ENCODE measurements at regions of chr7 and their contacts with region 1.

Region 1: GRCh38 chr7:75599244-75599781 is 107.2 kb downstream of the SPDYE5 start:
- DNase-seq: no peak
- H3K4me3 Mint-ChIP-seq: no peak overlapping the region
- H3K27ac Mint-ChIP-seq: no peak overlapping the region
- H3K4me1 Mint-ChIP-seq: peaks cover 23% of the 10 kb centered on the region
- H3K27me3 Mint-ChIP-seq: no peaks in the 10 kb centered on the region

Region 2: DNA sequence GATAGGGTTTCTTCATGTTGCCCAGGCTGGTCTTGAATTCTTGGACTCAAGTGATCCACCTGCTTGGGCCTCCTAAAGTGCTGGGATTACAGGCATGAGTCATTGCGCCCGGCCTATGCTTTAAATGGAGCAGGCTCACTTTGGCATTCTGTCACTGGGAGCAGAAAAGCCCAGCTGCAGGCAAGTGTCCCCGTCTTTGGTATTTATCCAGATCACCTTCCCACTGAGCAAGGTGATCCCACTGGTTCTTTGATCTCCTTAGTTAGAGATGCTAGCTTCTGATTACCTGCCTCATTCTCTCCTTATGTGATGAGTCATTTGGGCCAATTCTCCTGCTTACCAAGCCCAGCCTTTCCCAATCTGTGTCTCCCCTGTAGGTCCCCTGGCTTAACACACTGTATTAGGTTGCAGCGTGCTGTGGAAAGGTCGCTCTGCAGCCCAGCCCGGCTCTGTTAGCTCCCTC is 67.9 kb before region 1 on chr7:
- intact Hi-C with region 1: loop called (anchors 1 kb)
- DNase-seq: no peak
- H3K4me3 Mint-ChIP-seq: no peak overlapping the region
- H3K27ac Mint-ChIP-seq: no peak overlapping the region
- H3K4me1 Mint-ChIP-seq: peaks cover 23% of the 10 kb centered on the region
- H3K27me3 Mint-ChIP-seq: no peaks in the 10 kb centered on the region

Region 3: DNA sequence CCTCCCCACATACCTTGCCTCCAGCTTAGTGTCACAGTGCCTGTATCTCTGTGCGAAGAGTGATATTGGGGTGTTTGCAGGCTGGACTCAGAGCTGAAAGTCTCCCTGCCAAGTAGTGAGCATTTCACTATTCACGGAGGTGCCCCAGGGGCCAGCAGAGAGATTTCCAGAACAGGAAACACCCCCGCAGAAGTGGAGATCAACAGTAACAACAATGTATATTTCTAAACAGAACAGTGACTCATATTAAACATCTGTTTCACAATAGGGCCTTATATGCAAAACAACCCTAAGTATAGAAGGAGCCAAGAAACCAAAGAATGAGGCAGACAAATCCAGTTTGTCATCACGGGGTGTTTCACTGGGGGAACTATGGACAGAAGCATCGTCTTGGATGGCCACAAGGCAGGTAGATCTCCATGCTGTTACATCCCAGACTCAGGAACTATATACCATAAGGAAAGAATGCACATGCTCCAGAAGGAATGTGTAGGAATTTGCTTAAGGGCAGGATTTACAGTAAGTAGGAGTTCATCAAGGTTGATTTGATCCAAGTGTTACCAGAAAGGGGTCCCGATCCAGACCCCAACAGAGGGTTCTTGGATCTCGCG is 243.6 kb after region 1 on chr7:
- intact Hi-C with region 1: loop called (anchors 2 kb)
- DNase-seq: no peak
- H3K4me3 Mint-ChIP-seq: peak overlapping the region; percentile 62
- H3K27ac Mint-ChIP-seq: peak overlapping the region; percentile 97
- H3K4me1 Mint-ChIP-seq: peaks cover 14% of the 10 kb centered on the region
- H3K27me3 Mint-ChIP-seq: no peaks in the 10 kb centered on the region